ENCODE measurements at regions of chr18 and their contacts with region 1.

Region 1: GRCh38 chr18:59823596-59824195 is 76.1 kb upstream of the PMAIP1 start:
- DNase-seq: peak; percentile 59
- H3K4me3 Mint-ChIP-seq: no peak overlapping the region
- H3K27ac Mint-ChIP-seq: no peak overlapping the region
- H3K4me1 Mint-ChIP-seq: no peaks in the 10 kb centered on the region
- H3K27me3 Mint-ChIP-seq: peaks cover 24% of the 10 kb centered on the region

Region 2: GRCh38 chr18:59459369-59460079 is 364.2 kb before region 1 on chr18:
- CTCF ChIA-PET with region 1: interaction called, 47 read pairs
- POLR2A ChIA-PET with region 1: no interaction called
- DNase-seq: no peak
- H3K4me3 Mint-ChIP-seq: no peak overlapping the region
- H3K27ac Mint-ChIP-seq: no peak overlapping the region
- H3K4me1 Mint-ChIP-seq: no peaks in the 10 kb centered on the region
- H3K27me3 Mint-ChIP-seq: no peaks in the 10 kb centered on the region

Region 3: GRCh38 chr18:59631583-59632181 is 192.0 kb before region 1 on chr18:
- CTCF ChIA-PET with region 1: interaction called, 11 read pairs
- POLR2A ChIA-PET with region 1: no interaction called
- DNase-seq: no peak
- H3K4me3 Mint-ChIP-seq: no peak overlapping the region
- H3K27ac Mint-ChIP-seq: no peak overlapping the region
- H3K4me1 Mint-ChIP-seq: no peaks in the 10 kb centered on the region
- H3K27me3 Mint-ChIP-seq: no peaks in the 10 kb centered on the region

Region 4: DNA sequence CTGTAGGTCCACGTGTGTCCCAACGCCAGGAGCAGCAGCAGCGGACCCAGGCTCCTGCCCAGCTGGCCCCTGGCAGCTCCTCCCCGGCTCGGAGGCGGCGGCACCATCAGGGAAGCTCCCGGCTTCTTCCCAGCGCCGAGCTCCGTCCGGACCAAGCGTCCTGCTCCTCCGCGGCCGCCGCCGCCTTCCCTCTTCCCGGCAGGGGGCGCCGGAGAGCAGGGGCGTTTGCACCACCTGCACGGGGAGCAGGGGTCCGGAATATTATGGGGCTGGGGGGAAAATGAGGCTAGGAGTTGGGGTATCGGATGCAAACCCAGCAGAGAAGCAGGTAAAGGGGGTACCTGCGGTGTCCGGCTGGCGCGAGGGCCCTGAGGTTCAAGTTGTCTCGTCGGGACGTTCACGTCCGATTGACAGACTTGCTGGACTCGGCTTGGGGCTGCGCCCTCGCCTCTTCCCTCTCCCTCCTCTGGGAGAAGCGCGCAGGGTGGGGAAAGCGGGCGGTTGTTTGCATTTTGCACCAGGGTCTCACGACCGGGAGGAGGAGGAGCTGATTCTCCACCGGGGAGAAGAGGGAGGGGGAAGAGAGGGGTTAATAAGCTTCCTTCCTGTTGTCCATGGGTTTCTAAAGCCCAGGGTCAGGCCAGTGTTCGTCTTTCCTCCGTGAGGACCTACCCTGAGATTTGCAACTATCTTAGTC is 126.3 kb before region 1 on chr18 and contains the start of gene CCBE1:
- CTCF ChIA-PET with region 1: interaction called, 30 read pairs
- POLR2A ChIA-PET with region 1: no interaction called
- DNase-seq: peak; percentile 50
- H3K4me3 Mint-ChIP-seq: no peak within 1 kb of the TSS
- H3K27ac Mint-ChIP-seq: no peak within 1 kb of the TSS
- H3K4me1 Mint-ChIP-seq: peaks cover 9% of the 10 kb centered on the region
- H3K27me3 Mint-ChIP-seq: peaks cover 62% of the 10 kb centered on the region
- total RNA-seq, gene CCBE1: not detected

Region 5: DNA sequence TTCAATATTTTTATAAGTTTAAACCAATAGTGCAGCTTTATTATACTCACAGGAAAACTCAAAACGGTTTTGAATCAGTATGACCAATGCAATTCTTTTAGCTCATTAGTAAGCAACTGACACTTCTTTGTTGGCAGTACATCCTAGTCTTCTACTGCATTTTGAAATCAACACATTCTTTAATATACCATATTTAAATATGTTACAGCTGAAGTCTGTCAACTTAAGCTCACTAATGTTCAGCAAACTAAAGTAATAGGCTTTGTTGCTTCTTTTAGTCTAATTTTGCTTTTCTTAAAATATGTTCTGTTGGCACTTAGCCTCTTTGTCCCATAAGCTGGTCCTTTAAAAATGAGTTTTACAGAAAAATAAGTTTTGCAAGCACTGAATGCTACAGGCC is 71.0 kb before region 1 on chr18:
- CTCF ChIA-PET with region 1: no interaction called
- POLR2A ChIA-PET with region 1: no interaction called
- DNase-seq: no peak
- H3K4me3 Mint-ChIP-seq: no peak overlapping the region
- H3K27ac Mint-ChIP-seq: no peak overlapping the region
- H3K4me1 Mint-ChIP-seq: no peaks in the 10 kb centered on the region
- H3K27me3 Mint-ChIP-seq: peaks cover 6% of the 10 kb centered on the region

Region 6: GRCh38 chr18:59783138-59783537 is 40.6 kb before region 1 on chr18:
- CTCF ChIA-PET with region 1: interaction called, 50 read pairs
- POLR2A ChIA-PET with region 1: no interaction called
- DNase-seq: no peak
- H3K4me3 Mint-ChIP-seq: no peak overlapping the region
- H3K27ac Mint-ChIP-seq: no peak overlapping the region
- H3K4me1 Mint-ChIP-seq: no peaks in the 10 kb centered on the region
- H3K27me3 Mint-ChIP-seq: peaks cover 15% of the 10 kb centered on the region

Region 7: GRCh38 chr18:60064271-60064670 is 240.6 kb after region 1 on chr18:
- CTCF ChIA-PET with region 1: no interaction called
- POLR2A ChIA-PET with region 1: no interaction called
- DNase-seq: no peak
- H3K4me3 Mint-ChIP-seq: no peak overlapping the region
- H3K27ac Mint-ChIP-seq: no peak overlapping the region
- H3K4me1 Mint-ChIP-seq: no peaks in the 10 kb centered on the region
- H3K27me3 Mint-ChIP-seq: peaks cover 3% of the 10 kb centered on the region

Measured in activated CD4-positive, alpha-beta memory T cell treated with anti-CD3 and anti-CD28 coated beads, Interleukin-2, amount 10 ng/mL, durations not matched to agents 7 days and 5 days (primary cell).